Endothelial cell of umbilical vein (primary cell): ENCODE measurements at regions of chr3 and their contacts with region 1.

Region 1: DNA sequence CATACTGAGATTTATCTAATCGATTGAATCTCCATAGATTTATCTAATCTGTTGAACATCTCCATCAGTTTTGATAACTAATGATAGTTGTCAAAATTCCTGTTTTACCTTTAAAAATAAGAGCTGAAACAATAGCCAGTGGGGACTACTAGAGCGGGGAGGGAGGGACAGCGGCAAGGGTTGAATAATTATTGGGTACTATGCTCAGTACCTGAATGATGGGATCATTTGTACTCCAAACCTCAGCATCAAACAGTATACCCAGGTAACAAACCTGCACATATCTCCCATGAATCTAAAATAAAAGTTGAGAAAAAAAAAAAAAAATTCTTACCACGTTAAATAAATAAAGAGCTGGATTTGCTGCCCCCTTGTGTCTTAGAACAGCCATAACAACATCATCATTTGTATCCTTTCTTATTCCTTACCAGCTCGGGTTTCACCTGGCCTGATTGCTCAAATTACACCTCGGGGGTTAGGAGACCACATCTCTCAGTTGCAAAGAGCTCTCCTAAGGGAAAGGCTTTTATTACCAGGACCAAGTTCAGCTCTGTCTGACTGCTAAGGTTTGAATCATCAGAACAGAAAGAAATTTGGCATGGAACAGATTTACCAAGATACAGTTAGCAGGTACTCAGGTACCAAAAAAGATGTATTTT is 25.7 kb upstream of the RPL39L start:
- DNase-seq: peak; percentile 62
- H3K4me3 ChIP-seq: no peak overlapping the region
- H3K27ac ChIP-seq: no peak overlapping the region
- H3K4me1 ChIP-seq: no peaks in the 10 kb centered on the region
- H3K27me3 ChIP-seq: peaks cover 17 to 28% of the 10 kb centered on the region in 2 experiments
- CTCF ChIP-seq: peak; percentile 54 to 61
- POLR2A ChIP-seq: no peak

Region 2: DNA sequence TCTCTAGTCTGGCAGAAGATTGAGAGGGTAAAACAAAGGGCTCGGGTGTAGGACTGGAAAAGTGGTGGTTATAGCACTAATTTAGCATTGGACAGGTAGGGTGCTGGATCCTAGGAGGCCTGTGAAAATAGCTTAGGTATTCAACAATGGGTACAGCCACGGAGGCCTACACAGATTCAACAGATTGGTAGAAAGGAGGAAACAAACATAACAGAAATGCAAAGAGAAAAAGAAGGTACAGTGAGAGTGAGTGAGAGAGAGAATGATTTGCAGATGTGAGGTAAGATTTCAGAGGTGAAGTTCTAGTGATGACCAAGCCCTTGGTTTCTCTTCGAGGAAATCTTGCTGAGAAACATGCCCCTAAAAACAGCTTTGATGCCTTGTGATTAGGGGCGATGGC is 284.6 kb before region 1 on chr3:
- CTCF ChIA-PET with region 1: no interaction called
- POLR2A ChIA-PET with region 1: no interaction called
- dilution Hi-C with region 1: no loop called
- intact Hi-C with region 1: no loop called
- DNase-seq: no peak
- H3K4me3 ChIP-seq: no peak overlapping the region
- H3K27ac ChIP-seq: no peak overlapping the region
- H3K4me1 ChIP-seq: peaks cover 16% of the 10 kb centered on the region
- H3K27me3 ChIP-seq: no peaks in the 10 kb centered on the region
- CTCF ChIP-seq: no peak
- POLR2A ChIP-seq: no peak

Region 3: DNA sequence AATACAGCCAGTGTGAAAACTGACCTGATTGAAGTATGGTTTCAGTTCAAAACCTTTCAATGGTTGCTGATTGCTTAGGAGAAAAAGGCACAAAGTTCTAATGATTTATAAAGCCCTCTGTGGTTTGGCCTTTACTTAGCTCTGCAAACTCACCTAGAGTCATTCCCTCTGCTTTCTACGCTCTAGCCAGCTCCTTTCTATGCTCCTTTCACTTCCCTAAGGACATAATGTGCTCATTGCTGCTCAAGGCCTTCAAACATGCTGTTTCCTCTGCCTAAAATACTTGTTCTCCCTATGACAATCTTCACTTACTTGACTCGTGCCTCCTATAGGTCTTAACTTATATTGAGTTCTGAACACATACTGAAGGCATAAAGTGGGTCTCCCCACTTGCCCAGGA is 44.7 kb before region 1 on chr3:
- CTCF ChIA-PET with region 1: interaction called, 364 read pairs
- POLR2A ChIA-PET with region 1: no interaction called
- dilution Hi-C with region 1: no loop called
- intact Hi-C with region 1: no loop called
- DNase-seq: no peak
- H3K4me3 ChIP-seq: no peak overlapping the region
- H3K27ac ChIP-seq: no peak overlapping the region
- H3K4me1 ChIP-seq: no peaks in the 10 kb centered on the region
- H3K27me3 ChIP-seq: no peaks in the 10 kb centered on the region
- CTCF ChIP-seq: no peak
- POLR2A ChIP-seq: no peak

Region 4: GRCh38 chr3:187150599-187150998 is 14.4 kb before region 1 on chr3:
- CTCF ChIA-PET with region 1: interaction called, 26 read pairs
- POLR2A ChIA-PET with region 1: no interaction called
- dilution Hi-C with region 1: no loop called
- intact Hi-C with region 1: no loop called
- DNase-seq: peak; percentile 16
- H3K4me3 ChIP-seq: no peak overlapping the region
- H3K27ac ChIP-seq: no peak overlapping the region
- H3K4me1 ChIP-seq: no peaks in the 10 kb centered on the region
- H3K27me3 ChIP-seq: peaks cover 2 to 7% of the 10 kb centered on the region in 2 experiments
- CTCF ChIP-seq: peak; percentile 10 to 22
- POLR2A ChIP-seq: no peak

Region 5: DNA sequence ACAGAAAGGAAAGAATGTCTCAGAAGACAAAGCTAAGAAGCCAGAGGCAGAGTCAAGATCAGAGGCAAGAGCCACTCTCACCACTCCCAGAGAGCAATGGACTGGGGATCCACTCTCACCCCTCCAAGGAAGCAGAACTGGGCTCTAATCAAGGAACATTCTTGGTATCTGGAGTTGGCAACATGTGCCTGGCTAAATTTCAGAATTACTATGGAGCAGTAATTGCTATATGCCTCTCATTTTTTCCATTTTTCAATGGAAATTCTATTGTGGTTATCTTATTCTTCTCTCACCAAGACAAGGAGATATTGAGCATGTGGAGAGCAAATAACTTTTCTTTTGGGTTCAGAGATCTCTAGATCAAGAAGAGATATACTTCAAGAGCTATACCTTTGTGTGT is 104.5 kb after region 1 on chr3:
- CTCF ChIA-PET with region 1: no interaction called
- POLR2A ChIA-PET with region 1: no interaction called
- dilution Hi-C with region 1: no loop called
- intact Hi-C with region 1: no loop called
- DNase-seq: no peak
- H3K4me3 ChIP-seq: no peak overlapping the region
- H3K27ac ChIP-seq: no peak overlapping the region
- H3K4me1 ChIP-seq: peaks cover 19% of the 10 kb centered on the region
- H3K27me3 ChIP-seq: no peaks in the 10 kb centered on the region
- CTCF ChIP-seq: no peak
- POLR2A ChIP-seq: no peak

Region 6: GRCh38 chr3:187281191-187281714 is 116.2 kb after region 1 on chr3:
- CTCF ChIA-PET with region 1: no interaction called
- POLR2A ChIA-PET with region 1: no interaction called
- dilution Hi-C with region 1: no loop called
- intact Hi-C with region 1: no loop called
- DNase-seq: no peak
- H3K4me3 ChIP-seq: no peak overlapping the region
- H3K27ac ChIP-seq: no peak overlapping the region
- H3K4me1 ChIP-seq: no peaks in the 10 kb centered on the region
- H3K27me3 ChIP-seq: no peaks in the 10 kb centered on the region
- CTCF ChIP-seq: no peak
- POLR2A ChIP-seq: no peak